Endothelial cell of umbilical vein (primary cell): ENCODE measurements at regions of chr2 and their contacts with region 1.

Region 1: DNA sequence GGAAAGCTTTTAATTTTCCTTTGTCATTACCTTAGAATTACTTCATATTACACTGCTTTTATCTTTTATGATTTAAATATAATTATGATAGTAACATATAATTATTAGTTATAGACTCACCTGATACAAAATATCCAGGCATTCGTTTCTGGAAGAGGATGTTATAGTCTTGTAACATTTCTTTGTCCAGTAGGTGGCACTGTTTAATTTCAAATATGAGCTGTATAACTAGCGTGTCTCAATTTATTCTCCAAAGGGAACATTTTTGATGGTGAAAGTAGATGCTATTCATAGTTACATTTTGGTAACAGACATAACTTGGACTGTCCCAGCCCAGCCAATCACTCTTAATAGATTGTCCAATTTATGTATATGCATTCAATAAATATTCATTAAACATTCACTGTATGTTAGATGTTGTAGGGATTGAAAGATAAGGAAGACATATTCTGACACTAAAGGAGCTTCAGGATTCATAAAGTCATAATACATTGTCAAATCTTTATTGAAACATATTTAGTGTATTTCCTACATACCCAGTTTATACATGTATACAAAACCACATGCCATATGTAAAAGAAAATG is 19.2 kb downstream of the DAW1 start:
- DNase-seq: peak; percentile 58
- H3K4me3 ChIP-seq: no peak overlapping the region
- H3K27ac ChIP-seq: no peak overlapping the region
- H3K4me1 ChIP-seq: no peaks in the 10 kb centered on the region
- H3K27me3 ChIP-seq: no peaks in the 10 kb centered on the region
- CTCF ChIP-seq: peak; percentile 30 to 34
- POLR2A ChIP-seq: no peak

Region 2: DNA sequence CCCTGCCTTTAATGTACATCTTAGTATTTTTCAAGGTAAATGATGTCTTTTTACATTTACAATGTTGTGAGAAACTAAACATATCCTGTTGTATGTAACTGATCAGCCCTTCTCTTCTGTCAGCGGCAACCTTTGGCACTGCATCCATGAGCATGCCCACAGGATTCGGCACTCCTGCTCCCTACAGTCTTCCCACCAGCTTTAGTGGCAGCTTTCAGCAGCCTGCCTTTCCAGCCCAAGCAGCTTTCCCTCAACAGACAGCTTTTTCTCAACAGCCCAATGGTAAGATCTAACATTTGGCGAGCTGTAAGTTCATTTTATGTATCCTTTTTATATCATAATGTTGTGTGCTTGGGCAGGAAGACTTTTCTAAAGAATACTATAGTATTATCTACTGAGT is 338.8 kb before region 1 on chr2:
- CTCF ChIA-PET with region 1: no interaction called
- POLR2A ChIA-PET with region 1: no interaction called
- dilution Hi-C with region 1: no loop called
- intact Hi-C with region 1: no loop called
- DNase-seq: no peak
- H3K4me3 ChIP-seq: no peak overlapping the region
- H3K27ac ChIP-seq: no peak overlapping the region
- H3K4me1 ChIP-seq: no peaks in the 10 kb centered on the region
- H3K27me3 ChIP-seq: no peaks in the 10 kb centered on the region
- CTCF ChIP-seq: no peak
- POLR2A ChIP-seq: no peak

Region 3: GRCh38 chr2:227744276-227744675 is 146.3 kb before region 1 on chr2:
- CTCF ChIA-PET with region 1: interaction called, 12 read pairs
- POLR2A ChIA-PET with region 1: no interaction called
- dilution Hi-C with region 1: no loop called
- intact Hi-C with region 1: no loop called
- DNase-seq: no peak
- H3K4me3 ChIP-seq: no peak overlapping the region
- H3K27ac ChIP-seq: no peak overlapping the region
- H3K4me1 ChIP-seq: no peaks in the 10 kb centered on the region
- H3K27me3 ChIP-seq: no peaks in the 10 kb centered on the region
- CTCF ChIP-seq: no peak
- POLR2A ChIP-seq: no peak

Region 4: DNA sequence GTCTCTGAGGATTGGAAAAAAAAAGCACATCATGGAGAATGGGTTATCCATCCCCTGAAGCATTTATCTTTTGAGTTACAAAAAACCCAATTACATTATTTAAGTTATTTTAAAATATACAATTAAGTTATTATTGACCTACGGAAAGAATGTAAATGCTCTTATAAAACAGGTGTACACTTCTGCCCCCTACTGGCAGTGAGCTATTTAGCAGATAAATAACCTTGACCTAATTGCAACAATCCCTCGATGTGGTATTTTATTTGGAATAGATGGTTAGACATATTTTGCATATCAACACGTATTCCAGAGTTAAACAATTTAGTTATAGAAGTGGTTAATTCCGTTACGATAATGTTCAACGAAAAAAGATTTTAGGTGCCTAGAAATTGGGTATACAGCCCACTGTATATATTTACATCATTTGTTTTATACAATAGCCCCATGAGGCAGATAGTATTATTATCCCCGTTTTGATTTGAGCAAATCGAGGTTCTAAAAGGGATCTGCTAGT is 28.3 kb before region 1 on chr2:
- CTCF ChIA-PET with region 1: interaction called, 41 read pairs
- POLR2A ChIA-PET with region 1: no interaction called
- dilution Hi-C with region 1: no loop called
- intact Hi-C with region 1: no loop called
- DNase-seq: peak; percentile 70
- H3K4me3 ChIP-seq: no peak overlapping the region
- H3K27ac ChIP-seq: peak overlapping the region; percentile 75
- H3K4me1 ChIP-seq: peaks cover 23% of the 10 kb centered on the region
- H3K27me3 ChIP-seq: no peaks in the 10 kb centered on the region
- CTCF ChIP-seq: peak; percentile 46 to 54
- POLR2A ChIP-seq: no peak

Region 5: GRCh38 chr2:227877421-227878310 is 12.9 kb before region 1 on chr2:
- CTCF ChIA-PET with region 1: interaction called, 34 read pairs
- POLR2A ChIA-PET with region 1: no interaction called
- dilution Hi-C with region 1: no loop called
- intact Hi-C with region 1: no loop called
- DNase-seq: no peak
- H3K4me3 ChIP-seq: no peak overlapping the region
- H3K27ac ChIP-seq: no peak overlapping the region
- H3K4me1 ChIP-seq: no peaks in the 10 kb centered on the region
- H3K27me3 ChIP-seq: no peaks in the 10 kb centered on the region
- CTCF ChIP-seq: no peak
- POLR2A ChIP-seq: no peak

Region 6: DNA sequence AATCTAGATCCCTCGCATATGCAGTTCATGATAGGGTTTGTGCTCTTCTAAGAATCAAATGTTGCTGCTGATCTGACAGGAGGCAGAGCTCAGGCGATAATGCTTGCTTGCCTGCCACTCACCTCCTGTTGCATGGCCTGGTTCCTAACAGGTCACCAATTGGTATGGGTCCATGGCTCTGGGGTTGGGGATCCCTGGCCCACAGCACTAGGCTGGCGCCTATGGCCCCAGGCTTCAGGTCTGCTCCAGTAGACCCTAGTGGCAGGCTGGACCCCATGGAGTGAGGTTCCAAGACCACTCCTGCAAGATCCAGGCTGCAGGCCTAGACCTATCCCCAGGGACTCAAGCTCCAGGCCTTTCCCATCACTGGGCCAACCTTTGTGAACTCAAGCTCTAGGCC is 188.6 kb after region 1 on chr2:
- CTCF ChIA-PET with region 1: no interaction called
- POLR2A ChIA-PET with region 1: no interaction called
- dilution Hi-C with region 1: no loop called
- intact Hi-C with region 1: no loop called
- DNase-seq: no peak
- H3K4me3 ChIP-seq: no peak overlapping the region
- H3K27ac ChIP-seq: no peak overlapping the region
- H3K4me1 ChIP-seq: no peaks in the 10 kb centered on the region
- H3K27me3 ChIP-seq: no peaks in the 10 kb centered on the region
- CTCF ChIP-seq: no peak
- POLR2A ChIP-seq: no peak

Region 7: DNA sequence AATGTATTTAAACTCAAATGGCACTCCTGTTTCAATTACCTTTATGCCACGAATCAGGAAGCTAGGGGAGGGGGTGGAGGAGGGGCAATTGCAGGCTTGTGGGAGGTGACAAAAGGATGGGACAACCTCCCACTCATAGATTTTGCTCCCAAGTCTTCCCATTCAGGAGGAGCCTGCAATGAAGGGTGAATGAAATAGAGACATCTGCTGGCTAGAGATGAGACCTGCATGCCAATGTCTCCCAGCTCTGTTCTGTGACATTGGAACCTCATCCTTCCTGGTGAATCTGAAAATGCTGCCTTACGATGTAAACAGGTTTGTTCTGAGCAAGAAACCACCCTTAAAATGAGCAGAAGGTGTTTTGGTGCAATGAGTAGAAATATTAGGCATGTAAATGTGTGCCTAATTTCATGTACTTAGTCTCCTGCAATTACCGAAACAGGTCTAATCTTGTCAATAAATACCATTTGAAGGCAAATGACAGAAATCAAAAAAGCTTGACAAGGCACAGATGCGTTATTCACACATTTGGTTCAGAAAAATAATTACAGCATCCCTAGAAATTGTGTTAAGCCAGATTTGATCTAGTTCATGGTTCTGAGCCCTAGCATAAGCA is 1383.2 kb after region 1 on chr2:
- CTCF ChIA-PET with region 1: interaction called, 75 read pairs
- POLR2A ChIA-PET with region 1: no interaction called
- dilution Hi-C with region 1: no loop called
- intact Hi-C with region 1: no loop called
- DNase-seq: peak; percentile 21
- H3K4me3 ChIP-seq: no peak overlapping the region
- H3K27ac ChIP-seq: no peak overlapping the region
- H3K4me1 ChIP-seq: no peaks in the 10 kb centered on the region
- H3K27me3 ChIP-seq: no peaks in the 10 kb centered on the region
- CTCF ChIP-seq: peak; percentile 45 to 51
- POLR2A ChIP-seq: no peak

Region 8: GRCh38 chr2:229586746-229587705 is 1696.4 kb after region 1 on chr2:
- CTCF ChIA-PET with region 1: interaction called, 57 read pairs
- POLR2A ChIA-PET with region 1: no interaction called
- dilution Hi-C with region 1: no loop called
- intact Hi-C with region 1: loop called (anchors 1 kb)
- DNase-seq: peak; percentile 53
- H3K4me3 ChIP-seq: no peak overlapping the region
- H3K27ac ChIP-seq: no peak overlapping the region
- H3K4me1 ChIP-seq: no peaks in the 10 kb centered on the region
- H3K27me3 ChIP-seq: no peaks in the 10 kb centered on the region
- CTCF ChIP-seq: peak; percentile 70 to 93
- POLR2A ChIP-seq: no peak